Dorsolateral prefrontal cortex (tissue), 120 donors: ENCODE measurements at regions of chr19 and their contacts with region 1.

Region 1: DNA sequence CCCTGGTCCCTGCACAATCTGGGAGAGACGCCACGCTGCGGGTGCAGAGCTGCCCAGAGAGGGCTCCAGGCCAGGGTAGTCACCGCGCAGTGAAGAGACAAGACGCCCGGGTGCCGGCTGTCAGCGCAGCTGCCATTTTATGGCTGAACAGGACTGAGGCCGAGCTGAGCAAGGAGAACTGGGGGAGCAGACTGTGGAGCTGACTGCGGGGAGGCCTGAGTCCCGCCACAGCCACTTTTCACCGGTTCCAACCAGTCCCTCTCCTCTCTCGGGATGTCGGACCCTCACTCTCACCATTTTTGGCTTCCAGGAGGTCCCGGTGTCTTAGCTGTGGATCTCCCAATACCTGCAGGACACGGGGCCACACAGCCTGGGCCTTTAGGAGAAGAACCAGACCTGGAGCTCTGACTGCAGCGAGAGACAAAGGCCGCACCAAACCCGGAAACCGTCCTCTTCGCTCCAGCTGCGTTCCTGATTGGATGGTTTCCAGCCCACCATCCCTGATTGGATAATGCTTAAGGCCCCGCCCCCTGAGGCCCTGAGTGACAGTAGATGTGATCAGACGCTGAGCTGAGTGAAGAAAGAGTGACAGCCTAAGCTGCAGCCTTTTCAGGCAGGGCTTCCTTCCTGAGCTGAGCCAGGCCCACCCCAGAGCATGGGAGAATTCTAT is at the start of gene ZNF626:
- DNase-seq: peak; percentile 90 to 98 (median 96)
- H3K4me3 ChIP-seq: peak within 1 kb of the TSS; percentile 59 to 94 (median 81)
- H3K27ac ChIP-seq: peak within 1 kb of the TSS in 56 of 59 donors; percentile 39 to 92 (median 80)
- H3K27me3 ChIP-seq: no peaks in the 10 kb centered on the region
- CTCF ChIP-seq: peak in 6 of 56 donors; percentile 11 to 18 (median 14)
- total RNA-seq, gene ZNF626: 11.7 to 26.9 (median 18.8) TPM

Region 2: GRCh38 chr19:20611866-20612265 is 49.4 kb before region 1 on chr19:
- intact Hi-C with region 1: no loop called
- DNase-seq: no peak
- H3K4me3 ChIP-seq: peak overlapping the region in 22 of 59 donors; percentile 1 to 55 (median 40)
- H3K27ac ChIP-seq: no peak overlapping the region
- H3K27me3 ChIP-seq: no peaks in the 10 kb centered on the region
- CTCF ChIP-seq: no peak

Region 3: GRCh38 chr19:20776083-20777076 is 115.1 kb after region 1 on chr19 and contains the start of gene ZNF66:
- intact Hi-C with region 1: loop called (anchors 5 kb)
- DNase-seq: peak; percentile 95 to 99 (median 98)
- H3K4me3 ChIP-seq: peak within 1 kb of the TSS; percentile 43 to 98 (median 81)
- H3K27ac ChIP-seq: peak within 1 kb of the TSS in 35 of 59 donors; percentile 13 to 83 (median 57)
- H3K27me3 ChIP-seq: no peaks in the 10 kb centered on the region
- CTCF ChIP-seq: peak in 6 of 56 donors; percentile 11 to 29 (median 22)
- total RNA-seq, gene ZNF66: 5.6 to 20.0 (median 11.3) TPM

Region 4: GRCh38 chr19:20923077-20923871 is 262.0 kb after region 1 on chr19 and contains the start of gene ZNF85:
- intact Hi-C with region 1: loop called in 1 of 2 experiments (anchors 2 kb)
- DNase-seq: peak; percentile 83 to 96 (median 94)
- H3K4me3 ChIP-seq: peak within 1 kb of the TSS; percentile 48 to 93 (median 77)
- H3K27ac ChIP-seq: peak within 1 kb of the TSS in 57 of 59 donors; percentile 15 to 94 (median 79)
- H3K27me3 ChIP-seq: no peaks in the 10 kb centered on the region
- CTCF ChIP-seq: no peak
- total RNA-seq, gene ZNF85: 3.1 to 12.1 (median 7.1) TPM